PC-9 (cell line): ENCODE measurements at regions of chr15 and their contacts with region 1.

Region 1: GRCh38 chr15:50883903-50884302 is 24.6 kb upstream of the AP4E1 start:
- DNase-seq: peak in 1 of 2 experiments; percentile 23
- H3K4me3 ChIP-seq: no peak overlapping the region
- H3K27ac ChIP-seq: peak overlapping the region; percentile 68
- H3K4me1 ChIP-seq: peaks cover 30% of the 10 kb centered on the region
- H3K27me3 ChIP-seq: no peaks in the 10 kb centered on the region
- CTCF ChIP-seq: no peak

Region 2: DNA sequence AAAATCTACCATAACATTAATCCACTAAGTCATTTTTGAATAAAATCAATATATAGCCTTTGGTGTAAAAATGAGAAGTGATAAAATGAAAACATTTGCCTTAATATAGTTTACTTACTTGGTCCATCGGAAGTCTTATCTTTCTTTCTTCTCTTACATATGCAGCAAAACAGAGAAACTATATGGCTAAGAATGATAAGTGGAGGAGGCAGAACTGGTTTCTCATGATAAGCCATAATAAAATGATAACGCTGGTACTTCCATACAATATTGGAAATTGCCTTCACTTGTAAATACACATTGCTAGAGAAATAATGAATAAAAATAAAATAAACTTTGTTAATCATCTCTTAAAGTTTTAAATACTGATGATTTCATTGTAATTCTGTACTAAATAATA is 289.6 kb before region 1 on chr15:
- CTCF ChIA-PET with region 1: no interaction called
- POLR2A ChIA-PET with region 1: no interaction called
- intact Hi-C with region 1: no loop called
- DNase-seq: no peak
- H3K4me3 ChIP-seq: no peak overlapping the region
- H3K27ac ChIP-seq: no peak overlapping the region
- H3K4me1 ChIP-seq: no peaks in the 10 kb centered on the region
- H3K27me3 ChIP-seq: no peaks in the 10 kb centered on the region
- CTCF ChIP-seq: no peak

Region 3: GRCh38 chr15:50675536-50676144 is 208.3 kb before region 1 on chr15:
- CTCF ChIA-PET with region 1: no interaction called
- POLR2A ChIA-PET with region 1: no interaction called
- intact Hi-C with region 1: loop called (anchors 1 kb)
- DNase-seq: no peak
- H3K4me3 ChIP-seq: no peak overlapping the region
- H3K27ac ChIP-seq: no peak overlapping the region; the same call in 1 of the 2 replicates
- H3K4me1 ChIP-seq: no peaks in the 10 kb centered on the region
- H3K27me3 ChIP-seq: no peaks in the 10 kb centered on the region
- CTCF ChIP-seq: peak; percentile 84

Region 4: GRCh38 chr15:50798684-50799083 is 85.2 kb before region 1 on chr15:
- CTCF ChIA-PET with region 1: interaction called, 3 read pairs
- POLR2A ChIA-PET with region 1: no interaction called
- intact Hi-C with region 1: loop called (anchors 1 kb)
- DNase-seq: peak; percentile 27 to 69
- H3K4me3 ChIP-seq: no peak overlapping the region
- H3K27ac ChIP-seq: no peak overlapping the region
- H3K4me1 ChIP-seq: peaks cover 22% of the 10 kb centered on the region
- H3K27me3 ChIP-seq: no peaks in the 10 kb centered on the region
- CTCF ChIP-seq: no peak

Region 5: DNA sequence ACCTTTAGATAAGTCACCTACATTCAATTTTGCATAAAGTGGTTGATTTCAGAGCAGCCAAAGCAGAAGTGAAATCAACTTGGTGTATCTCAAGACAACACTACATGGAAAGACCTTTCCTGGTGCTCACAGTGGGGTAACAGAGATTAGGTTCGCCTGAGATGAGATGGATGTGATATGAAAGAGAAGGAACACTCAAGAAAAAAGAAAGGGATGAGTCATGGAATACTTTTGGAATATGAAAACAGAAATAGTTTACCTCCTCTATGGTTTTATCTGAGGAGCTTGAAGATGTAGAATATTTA is 28.9 kb before region 1 on chr15:
- CTCF ChIA-PET with region 1: no interaction called
- POLR2A ChIA-PET with region 1: interaction called, 8 read pairs
- intact Hi-C with region 1: loop called (anchors 1 kb)
- DNase-seq: peak in 1 of 2 experiments; percentile 35
- H3K4me3 ChIP-seq: no peak overlapping the region
- H3K27ac ChIP-seq: peak overlapping the region; percentile 50
- H3K4me1 ChIP-seq: peaks cover 36% of the 10 kb centered on the region
- H3K27me3 ChIP-seq: no peaks in the 10 kb centered on the region
- CTCF ChIP-seq: no peak